Activated T-helper 2 cell treated with anti-CD3 and anti-CD28 coated beads, Interferon-gamma antibody, Interleukin-2, Interleukin-4, amounts not matched to agents 10 μg/mL and 5 μg/mL and 100 μg/mL, durations not matched to agents 14 hours and 24 hours and 36 hours (primary cell): ENCODE measurements at regions of chr13 and their contacts with region 1.

Region 1: DNA sequence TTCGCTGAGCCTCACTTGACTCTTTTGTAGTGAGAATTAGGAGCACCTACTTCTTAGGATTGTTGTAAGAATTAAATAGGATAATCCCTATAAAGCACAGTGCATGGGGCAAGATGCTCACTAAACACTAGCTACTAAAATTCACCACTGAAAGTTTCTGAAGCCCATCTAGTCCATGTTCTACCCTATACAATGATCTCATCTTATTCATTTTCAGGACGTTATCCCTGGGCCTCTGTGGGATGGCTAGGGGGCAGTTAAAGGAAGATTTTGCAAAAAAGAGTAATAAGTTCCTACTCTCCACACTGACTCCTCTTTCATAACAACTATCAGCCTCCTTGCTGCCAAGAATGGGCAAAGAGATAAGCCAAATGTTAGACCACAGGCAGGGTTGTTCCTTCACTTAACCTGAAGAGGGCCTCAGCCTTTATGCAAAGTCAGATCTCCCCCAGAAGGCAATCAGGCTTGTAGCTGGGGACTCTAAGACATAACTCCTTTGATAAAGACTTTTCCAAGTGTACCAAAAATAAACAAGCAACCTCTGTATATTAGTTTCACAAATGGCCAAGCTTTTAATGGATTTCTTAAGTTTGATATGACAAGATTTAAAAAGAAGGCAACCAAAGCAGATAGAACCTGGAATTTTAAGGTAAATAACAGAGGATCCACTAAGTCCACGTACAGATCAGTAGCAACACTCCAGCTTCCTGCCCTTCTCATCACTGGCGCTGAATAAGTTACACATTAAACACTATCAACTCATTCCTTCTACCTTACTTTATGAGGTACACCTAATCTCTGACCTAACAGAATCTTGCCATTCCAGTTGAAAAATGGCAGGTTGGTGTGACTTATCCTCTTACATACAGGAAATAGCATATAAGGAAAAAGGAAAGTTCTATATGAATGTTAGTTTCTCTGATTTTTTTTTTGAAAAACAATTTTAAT is 44.4 kb downstream of the ELF1 start:
- DNase-seq: no peak
- H3K4me3 Mint-ChIP-seq: no peak overlapping the region
- H3K27ac Mint-ChIP-seq: peak overlapping the region; percentile 50
- H3K4me1 Mint-ChIP-seq: peaks cover 86% of the 10 kb centered on the region
- H3K27me3 Mint-ChIP-seq: no peaks in the 10 kb centered on the region

Region 2: GRCh38 chr13:40992678-40993518 is 18.2 kb after region 1 on chr13:
- intact Hi-C with region 1: loop called (anchors 2 kb)
- DNase-seq: no peak
- H3K4me3 Mint-ChIP-seq: no peak overlapping the region
- H3K27ac Mint-ChIP-seq: peak overlapping the region; percentile 68
- H3K4me1 Mint-ChIP-seq: peaks cover 64% of the 10 kb centered on the region
- H3K27me3 Mint-ChIP-seq: no peaks in the 10 kb centered on the region

Region 3: GRCh38 chr13:41004875-41005693 is 30.4 kb after region 1 on chr13:
- intact Hi-C with region 1: no loop called
- DNase-seq: no peak
- H3K4me3 Mint-ChIP-seq: peak overlapping the region; percentile 64
- H3K27ac Mint-ChIP-seq: peak overlapping the region; percentile 96
- H3K4me1 Mint-ChIP-seq: peaks cover 63% of the 10 kb centered on the region
- H3K27me3 Mint-ChIP-seq: no peaks in the 10 kb centered on the region

Region 4: GRCh38 chr13:41054212-41054877 is 79.6 kb after region 1 on chr13:
- intact Hi-C with region 1: loop called (anchors 1 kb)
- DNase-seq: no peak
- H3K4me3 Mint-ChIP-seq: no peak overlapping the region
- H3K27ac Mint-ChIP-seq: no peak overlapping the region
- H3K4me1 Mint-ChIP-seq: peaks cover 44% of the 10 kb centered on the region
- H3K27me3 Mint-ChIP-seq: no peaks in the 10 kb centered on the region

Region 5: DNA sequence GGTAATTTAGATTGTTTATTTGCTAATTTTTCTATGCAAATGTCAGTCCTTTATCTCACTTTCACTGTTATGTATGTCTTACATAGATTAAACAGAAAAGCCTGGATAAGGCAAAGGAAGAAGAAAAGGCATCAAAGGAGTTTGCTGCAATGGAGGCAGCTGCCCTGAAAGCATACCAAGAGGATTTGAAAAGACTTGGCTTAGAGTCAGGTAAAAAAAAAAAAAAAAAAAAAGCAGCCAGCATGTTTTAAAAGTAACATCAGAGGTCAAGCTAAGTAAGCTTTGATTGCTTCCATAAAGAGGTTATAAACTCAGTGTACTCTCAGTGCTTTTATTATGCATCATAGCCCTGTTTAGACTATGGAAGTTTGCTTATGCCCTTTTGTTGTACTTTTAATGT is 90.3 kb after region 1 on chr13:
- intact Hi-C with region 1: no loop called
- DNase-seq: no peak
- H3K4me3 Mint-ChIP-seq: no peak overlapping the region
- H3K27ac Mint-ChIP-seq: no peak overlapping the region
- H3K4me1 Mint-ChIP-seq: peaks cover 23% of the 10 kb centered on the region
- H3K27me3 Mint-ChIP-seq: no peaks in the 10 kb centered on the region